ENCODE measurements at regions of chr7 and their contacts with region 1.

Region 1: DNA sequence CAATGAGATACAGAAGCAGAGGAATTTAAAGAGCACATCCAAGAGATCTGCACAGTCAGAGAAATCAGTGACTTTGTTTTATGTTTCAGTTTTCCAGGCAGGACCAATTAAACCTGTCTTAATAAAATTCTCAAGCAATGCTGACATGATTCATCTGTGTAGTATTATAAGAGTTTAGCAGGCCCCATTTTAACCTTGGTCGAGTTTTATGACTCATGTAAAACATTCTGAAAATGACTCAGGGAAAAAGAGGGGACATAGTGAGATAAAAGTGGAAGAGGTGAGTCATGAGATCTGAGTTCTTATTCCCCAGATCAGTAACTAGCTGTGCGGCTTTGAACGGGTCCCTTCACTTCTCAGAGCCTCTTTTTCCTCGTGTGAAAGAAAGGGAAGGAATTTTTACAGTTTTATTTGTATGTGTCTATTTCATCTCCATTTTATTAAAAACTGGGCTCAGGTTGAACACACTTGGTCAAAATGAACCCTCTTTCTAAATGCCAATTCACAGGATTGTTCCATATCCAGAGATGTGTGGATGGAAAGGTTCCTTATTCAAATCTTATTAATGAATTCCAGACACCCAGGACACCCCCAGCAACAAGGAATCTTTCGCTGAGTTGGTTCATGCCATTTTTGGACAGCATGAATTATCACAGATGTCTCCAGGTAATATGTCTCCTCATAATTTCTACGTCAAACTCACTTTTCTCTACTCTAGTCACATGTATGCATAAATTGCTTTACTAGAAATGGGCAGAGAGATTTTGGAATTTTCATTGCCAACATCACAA is 143.2 kb downstream of the JAZF1 start:
- DNase-seq: no peak
- H3K4me3 Mint-ChIP-seq: no peak overlapping the region
- H3K27ac Mint-ChIP-seq: no peak overlapping the region
- H3K4me1 Mint-ChIP-seq: peaks cover 31% of the 10 kb centered on the region
- H3K27me3 Mint-ChIP-seq: peaks cover 35% of the 10 kb centered on the region

Region 2: GRCh38 chr7:27784393-27785053 is 252.9 kb before region 1 on chr7:
- intact Hi-C with region 1: loop called (anchors 5 kb)
- DNase-seq: no peak
- H3K4me3 Mint-ChIP-seq: no peak overlapping the region
- H3K27ac Mint-ChIP-seq: no peak overlapping the region
- H3K4me1 Mint-ChIP-seq: peaks cover 18% of the 10 kb centered on the region
- H3K27me3 Mint-ChIP-seq: no peaks in the 10 kb centered on the region

Region 3: DNA sequence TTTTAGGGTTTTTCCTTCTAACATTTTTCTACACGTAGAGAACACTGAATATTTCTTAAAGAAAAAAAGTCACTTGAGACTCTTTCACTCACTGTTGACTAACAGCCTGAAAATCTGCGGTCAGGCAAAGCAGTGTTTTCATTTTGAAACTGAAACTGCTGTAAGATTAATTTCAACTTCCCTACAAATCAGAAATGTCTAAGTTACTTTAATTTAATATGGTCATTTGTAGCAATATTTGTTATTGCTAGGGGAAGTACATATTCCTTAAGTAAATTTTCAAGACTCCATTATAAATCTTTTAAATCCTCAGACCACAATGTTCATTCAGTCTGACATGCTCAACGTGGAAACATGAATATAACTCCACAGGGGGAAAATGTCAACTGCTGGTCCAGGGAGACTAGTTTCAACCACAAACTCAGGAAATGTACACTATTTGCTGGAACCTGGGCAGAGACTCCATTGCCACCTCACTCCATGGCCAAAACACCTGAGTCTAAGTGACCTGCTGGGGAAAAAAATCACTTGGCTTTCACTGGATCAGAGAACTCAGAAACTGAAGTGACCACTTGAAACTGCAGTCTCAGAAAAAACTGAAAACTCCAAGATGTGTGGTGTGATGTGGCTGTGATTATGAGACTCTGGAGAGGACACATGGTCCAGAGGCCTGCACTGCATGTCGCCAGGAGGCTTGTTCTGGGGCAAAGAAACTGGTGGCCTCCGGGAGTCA is 136.2 kb before region 1 on chr7:
- intact Hi-C with region 1: loop called (anchors 2 kb)
- DNase-seq: peak; percentile 22
- H3K4me3 Mint-ChIP-seq: no peak overlapping the region
- H3K27ac Mint-ChIP-seq: no peak overlapping the region
- H3K4me1 Mint-ChIP-seq: peaks cover 24% of the 10 kb centered on the region
- H3K27me3 Mint-ChIP-seq: peaks cover 21% of the 10 kb centered on the region

Region 4: DNA sequence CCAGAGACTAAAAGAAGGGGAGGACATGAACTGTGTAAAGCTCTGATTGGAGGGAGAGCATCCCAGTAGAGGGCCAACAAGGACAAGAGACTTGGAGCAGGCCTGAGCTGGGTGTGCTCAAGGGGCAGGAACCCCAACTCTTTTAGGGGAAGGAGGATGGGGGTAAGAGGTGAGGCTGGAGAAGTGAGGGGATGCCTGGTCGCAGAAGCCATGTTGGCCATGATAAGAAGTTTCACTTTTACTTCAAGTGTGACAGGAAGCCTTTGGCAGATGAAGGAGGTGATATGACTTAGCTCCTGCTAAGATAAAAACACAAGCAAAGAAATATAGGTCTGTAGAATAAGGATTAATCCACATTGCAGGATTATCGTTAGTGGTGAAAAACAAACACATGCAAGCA is 65.1 kb before region 1 on chr7:
- intact Hi-C with region 1: loop called (anchors 5 kb)
- DNase-seq: peak; percentile 15
- H3K4me3 Mint-ChIP-seq: peak overlapping the region; percentile 54
- H3K27ac Mint-ChIP-seq: no peak overlapping the region
- H3K4me1 Mint-ChIP-seq: peaks cover 20% of the 10 kb centered on the region
- H3K27me3 Mint-ChIP-seq: peaks cover 17% of the 10 kb centered on the region

Region 5: DNA sequence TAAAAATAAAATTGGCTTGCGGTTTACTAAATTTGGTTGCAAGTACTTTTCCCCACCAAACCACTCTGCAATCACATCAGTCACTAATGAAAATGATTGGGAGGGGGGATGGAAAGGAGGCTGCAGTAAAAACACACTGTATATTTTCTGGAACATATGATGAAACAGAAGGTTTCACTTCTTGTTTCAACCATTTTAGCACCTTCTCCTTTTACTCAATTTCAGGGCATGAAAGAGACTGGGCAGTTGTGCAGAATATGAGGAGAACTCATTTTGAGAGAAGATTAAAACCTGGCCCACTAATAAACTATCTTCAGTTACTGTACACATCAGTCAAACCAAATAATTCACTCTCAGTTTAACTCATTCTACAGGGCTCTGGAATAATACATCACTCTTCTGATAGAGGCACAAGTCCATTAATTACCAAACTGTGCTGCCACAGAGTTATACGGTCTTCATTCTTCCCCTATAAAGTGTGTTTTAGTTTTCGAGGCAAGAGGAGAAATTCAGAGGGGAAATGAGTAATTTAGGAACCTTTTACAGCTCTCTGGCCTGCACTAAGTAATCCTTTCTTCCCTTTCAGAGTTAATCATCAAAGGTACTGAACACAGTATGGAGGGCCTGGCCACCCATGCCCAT is 117.7 kb after region 1 on chr7:
- intact Hi-C with region 1: loop called (anchors 2 kb)
- DNase-seq: no peak
- H3K4me3 Mint-ChIP-seq: no peak overlapping the region
- H3K27ac Mint-ChIP-seq: peak overlapping the region; percentile 60
- H3K4me1 Mint-ChIP-seq: peaks cover 47% of the 10 kb centered on the region
- H3K27me3 Mint-ChIP-seq: peaks cover 26% of the 10 kb centered on the region

Region 6: GRCh38 chr7:28239823-28240204 is 202.4 kb after region 1 on chr7:
- intact Hi-C with region 1: loop called (anchors 2 kb)
- DNase-seq: no peak
- H3K4me3 Mint-ChIP-seq: no peak overlapping the region
- H3K27ac Mint-ChIP-seq: no peak overlapping the region
- H3K4me1 Mint-ChIP-seq: peaks cover 9% of the 10 kb centered on the region
- H3K27me3 Mint-ChIP-seq: peaks cover 64% of the 10 kb centered on the region

Region 7: DNA sequence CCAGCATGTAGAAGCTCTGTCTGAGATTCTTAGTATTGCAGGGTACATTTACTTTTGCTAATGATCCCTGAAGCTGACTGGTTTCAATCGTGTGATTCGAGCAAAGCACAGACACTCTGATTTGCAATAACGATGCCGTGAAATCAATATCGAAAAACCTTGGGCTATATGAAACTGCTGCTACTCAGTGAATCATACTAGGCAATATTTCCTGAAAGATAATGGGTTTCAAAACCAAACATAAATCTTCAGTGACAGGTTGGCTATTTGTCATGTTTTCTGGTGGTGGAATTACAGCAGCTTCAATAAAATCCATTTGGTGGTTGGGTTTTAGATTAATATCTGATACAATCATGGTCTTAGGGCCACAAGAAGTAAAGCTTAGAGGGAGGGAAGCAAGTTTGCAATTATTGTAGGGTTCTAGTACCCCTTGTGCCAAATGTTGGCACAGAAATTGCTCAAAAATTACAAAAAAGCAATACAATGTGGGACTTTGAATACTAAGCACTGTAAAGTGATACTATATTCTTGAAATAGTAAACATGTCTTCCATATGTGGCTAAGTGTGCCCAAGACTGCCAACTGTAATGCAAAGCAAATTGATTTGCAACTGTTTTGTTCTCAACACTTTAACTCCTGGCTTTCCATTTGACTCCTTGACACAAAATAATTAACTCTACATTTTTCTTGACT is 255.6 kb after region 1 on chr7:
- intact Hi-C with region 1: loop called (anchors 1 kb)
- DNase-seq: no peak
- H3K4me3 Mint-ChIP-seq: no peak overlapping the region
- H3K27ac Mint-ChIP-seq: no peak overlapping the region
- H3K4me1 Mint-ChIP-seq: peaks cover 10% of the 10 kb centered on the region
- H3K27me3 Mint-ChIP-seq: peaks cover 46% of the 10 kb centered on the region

Measured in activated T-helper 2 cell treated with anti-CD3 and anti-CD28 coated beads, Interferon-gamma antibody, Interleukin-2, Interleukin-4, amounts not matched to agents 10 μg/mL and 5 μg/mL and 100 μg/mL, durations not matched to agents 14 hours and 24 hours and 36 hours (primary cell).